ENCODE measurements at regions of chr3 and their contacts with region 1.

Region 1: DNA sequence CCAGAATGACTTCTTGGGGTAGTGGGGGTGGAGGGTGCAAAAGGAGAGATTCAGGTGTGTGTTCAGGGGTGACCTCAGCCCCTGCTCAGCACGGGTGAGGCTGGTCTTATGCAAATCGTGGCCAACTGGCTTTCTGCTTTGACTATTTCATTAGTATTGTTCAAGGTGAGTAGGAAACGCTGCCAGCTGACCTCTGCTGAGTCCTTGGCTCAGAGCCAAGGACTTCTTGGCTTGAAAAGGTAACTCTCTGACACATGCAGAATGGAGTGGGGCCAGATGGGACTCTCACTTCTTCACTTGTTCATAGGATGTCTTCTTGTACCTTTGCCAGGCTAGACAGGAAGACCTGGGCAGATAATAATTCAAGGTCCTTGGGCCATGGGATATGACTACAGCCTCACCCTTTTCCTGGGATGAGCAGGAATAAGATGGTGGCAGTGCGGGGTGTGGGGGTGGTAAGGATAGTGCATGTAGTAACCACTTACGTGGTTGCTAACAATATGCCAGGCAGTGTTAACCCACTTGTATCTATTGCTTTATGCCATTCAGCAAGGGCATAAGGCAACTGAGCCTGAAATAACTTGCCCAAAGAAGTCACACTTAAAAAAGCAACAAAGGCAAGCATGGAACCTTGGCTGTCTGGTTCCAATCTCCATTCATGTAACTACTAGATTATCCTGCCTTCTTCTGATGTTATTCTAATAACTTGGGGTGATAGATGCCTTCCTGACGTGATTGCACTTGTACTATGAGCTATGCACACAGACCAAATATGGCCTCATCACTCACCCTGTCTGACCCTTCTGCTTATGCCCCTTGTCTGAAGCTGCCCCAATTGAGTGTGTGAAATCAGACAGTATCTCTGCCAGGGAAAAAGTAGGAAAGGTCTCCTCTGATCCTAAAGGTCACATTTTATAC is 193.1 kb downstream of the NR1D2 start:
- DNase-seq: peak; percentile 13
- H3K4me3 ChIP-seq: no peak overlapping the region
- H3K27ac ChIP-seq: peak overlapping the region; percentile 57 to 71 (median 66)
- H3K4me1 ChIP-seq: peaks cover 0 to 23% (median 4%) of the 10 kb centered on the region in 4 donors
- H3K27me3 ChIP-seq: no peaks in the 10 kb centered on the region
- CTCF ChIP-seq: no peak
- EP300 ChIP-seq: no peak
- POLR2A ChIP-seq: no peak

Region 2: GRCh38 chr3:22977650-22978289 is 1160.4 kb before region 1 on chr3:
- in situ Hi-C with region 1: no loop called
- intact Hi-C with region 1: loop called (anchors 5 kb)
- DNase-seq: no peak
- H3K4me3 ChIP-seq: no peak overlapping the region
- H3K27ac ChIP-seq: no peak overlapping the region
- H3K4me1 ChIP-seq: no peaks in the 10 kb centered on the region
- H3K27me3 ChIP-seq: no peaks in the 10 kb centered on the region
- CTCF ChIP-seq: no peak
- EP300 ChIP-seq: no peak
- POLR2A ChIP-seq: no peak

Region 3: DNA sequence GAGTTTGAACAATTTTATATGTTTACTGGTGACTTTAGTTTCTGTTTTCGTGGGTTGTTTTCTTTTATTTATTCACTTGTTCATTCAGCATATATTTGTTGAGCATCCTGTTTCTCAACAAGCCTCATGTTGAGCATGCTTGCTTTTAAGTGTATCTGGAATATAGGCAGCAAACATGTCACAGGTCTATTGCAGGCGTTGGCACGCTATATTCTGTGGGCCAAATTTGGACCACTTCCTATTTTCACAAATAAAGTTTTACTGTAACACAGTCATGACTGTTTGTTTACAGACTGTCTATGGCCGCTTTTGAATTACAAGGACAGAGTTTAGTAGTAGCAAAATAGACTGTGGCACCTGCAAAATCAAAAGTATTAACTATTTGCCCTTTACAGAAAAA is 266.8 kb after region 1 on chr3:
- in situ Hi-C with region 1: no loop called
- intact Hi-C with region 1: loop called (anchors 5 kb)
- DNase-seq: peak; percentile 14
- H3K4me3 ChIP-seq: no peak overlapping the region
- H3K27ac ChIP-seq: no peak overlapping the region
- H3K4me1 ChIP-seq: peaks cover 14 to 31% (median 20%) of the 10 kb centered on the region in 4 donors
- H3K27me3 ChIP-seq: no peaks in the 10 kb centered on the region
- CTCF ChIP-seq: no peak
- EP300 ChIP-seq: no peak
- POLR2A ChIP-seq: no peak

Measured in transverse colon (tissue), 4 donors.